ENCODE measurements at regions of chr20 and their contacts with region 1.

Region 1: DNA sequence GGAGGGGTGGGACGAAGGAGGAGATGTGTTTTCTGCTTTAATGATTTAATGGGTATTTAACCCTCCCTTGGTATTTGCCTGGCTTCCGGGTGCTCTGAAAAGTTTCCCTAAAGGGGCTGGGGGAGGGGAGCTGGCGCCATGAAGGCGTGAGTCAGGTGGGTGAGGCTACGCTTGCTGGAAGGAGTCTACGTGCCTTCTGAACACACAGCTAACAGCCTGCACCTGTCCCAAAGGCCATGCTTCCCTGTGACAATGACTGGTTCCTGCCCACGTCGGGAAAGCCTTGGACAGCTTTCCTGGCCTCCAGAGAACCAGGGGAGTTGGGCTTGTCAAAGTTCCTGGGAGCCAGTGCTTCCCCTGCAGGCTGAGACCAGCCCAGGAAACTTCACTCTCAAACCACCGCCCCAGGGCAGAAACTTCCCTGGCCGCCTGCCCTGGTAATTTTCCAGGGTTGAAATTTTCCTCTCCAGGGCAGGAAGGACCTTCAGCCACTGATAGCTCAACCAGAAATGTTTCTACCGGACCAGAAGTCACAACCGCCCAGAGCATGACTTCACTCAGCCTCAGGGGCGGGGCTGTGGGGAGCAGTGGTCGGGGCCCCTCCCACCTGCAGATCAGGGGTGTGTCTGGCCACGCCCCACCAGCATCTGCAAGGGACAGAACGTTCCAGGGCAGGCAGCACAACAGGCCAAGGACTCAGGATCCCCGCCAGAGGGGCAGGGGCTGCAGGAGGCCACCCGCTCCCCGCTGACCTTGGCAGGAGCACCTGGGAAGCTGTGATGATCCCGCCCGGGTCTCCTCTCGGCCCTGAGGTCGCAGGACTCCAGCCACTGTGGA is 18.6 kb upstream of the SLCO4A1 start:
- DNase-seq: peak; percentile 65 to 87 (median 84)
- ATAC-seq: peak; percentile 97
- H3K4me3 ChIP-seq: peak overlapping the region; percentile 24 to 28
- H3K4me3 Mint-ChIP-seq: peak overlapping the region; percentile 60
- H3K27ac ChIP-seq: peak overlapping the region in 1 of 2 experiments; percentile 12
- H3K27ac Mint-ChIP-seq: peak overlapping the region; percentile 60
- H3K4me1 ChIP-seq: peaks cover 19% of the 10 kb centered on the region
- H3K4me1 Mint-ChIP-seq: peaks cover 14% of the 10 kb centered on the region
- H3K27me3 ChIP-seq: no peaks in the 10 kb centered on the region
- H3K27me3 Mint-ChIP-seq: no peaks in the 10 kb centered on the region
- CTCF ChIP-seq: no peak

Region 2: GRCh38 chr20:62642040-62642665 is 18.4 kb after region 1 on chr20 and contains the start of gene SLCO4A1:
- CTCF ChIA-PET with region 1: no interaction called
- POLR2A ChIA-PET with region 1: no interaction called
- intact Hi-C with region 1: loop called in 1 of 2 experiments (anchors 1 kb)
- DNase-seq: peak; percentile 57 to 90 (median 80)
- ATAC-seq: peak; percentile 92
- H3K4me3 ChIP-seq: peak within 1 kb of the TSS; percentile 34 to 59
- H3K4me3 Mint-ChIP-seq: peak within 1 kb of the TSS; percentile 85
- H3K27ac ChIP-seq: no peak within 1 kb of the TSS
- H3K27ac Mint-ChIP-seq: no peak within 1 kb of the TSS
- H3K4me1 ChIP-seq: peaks cover 21% of the 10 kb centered on the region
- H3K4me1 Mint-ChIP-seq: peaks cover 7% of the 10 kb centered on the region
- H3K27me3 ChIP-seq: no peaks in the 10 kb centered on the region
- H3K27me3 Mint-ChIP-seq: peaks cover 2% of the 10 kb centered on the region
- CTCF ChIP-seq: no peak
- total RNA-seq, gene SLCO4A1: 4.5 to 4.7 TPM

Region 3: GRCh38 chr20:62652051-62652926 is 28.6 kb after region 1 on chr20:
- CTCF ChIA-PET with region 1: interaction called, 4 read pairs
- POLR2A ChIA-PET with region 1: interaction called, 3 read pairs
- intact Hi-C with region 1: loop called in 1 of 2 experiments (anchors 1 kb)
- DNase-seq: peak; percentile 44 to 88 (median 75)
- ATAC-seq: peak; percentile 59
- H3K4me3 ChIP-seq: peak overlapping the region; percentile 29 to 35
- H3K4me3 Mint-ChIP-seq: peak overlapping the region; percentile 80
- H3K27ac ChIP-seq: peak overlapping the region; percentile 82 to 83
- H3K27ac Mint-ChIP-seq: peak overlapping the region; percentile 97
- H3K4me1 ChIP-seq: peaks cover 24% of the 10 kb centered on the region
- H3K4me1 Mint-ChIP-seq: peaks cover 31% of the 10 kb centered on the region
- H3K27me3 ChIP-seq: no peaks in the 10 kb centered on the region
- H3K27me3 Mint-ChIP-seq: no peaks in the 10 kb centered on the region
- CTCF ChIP-seq: no peak

Region 4: DNA sequence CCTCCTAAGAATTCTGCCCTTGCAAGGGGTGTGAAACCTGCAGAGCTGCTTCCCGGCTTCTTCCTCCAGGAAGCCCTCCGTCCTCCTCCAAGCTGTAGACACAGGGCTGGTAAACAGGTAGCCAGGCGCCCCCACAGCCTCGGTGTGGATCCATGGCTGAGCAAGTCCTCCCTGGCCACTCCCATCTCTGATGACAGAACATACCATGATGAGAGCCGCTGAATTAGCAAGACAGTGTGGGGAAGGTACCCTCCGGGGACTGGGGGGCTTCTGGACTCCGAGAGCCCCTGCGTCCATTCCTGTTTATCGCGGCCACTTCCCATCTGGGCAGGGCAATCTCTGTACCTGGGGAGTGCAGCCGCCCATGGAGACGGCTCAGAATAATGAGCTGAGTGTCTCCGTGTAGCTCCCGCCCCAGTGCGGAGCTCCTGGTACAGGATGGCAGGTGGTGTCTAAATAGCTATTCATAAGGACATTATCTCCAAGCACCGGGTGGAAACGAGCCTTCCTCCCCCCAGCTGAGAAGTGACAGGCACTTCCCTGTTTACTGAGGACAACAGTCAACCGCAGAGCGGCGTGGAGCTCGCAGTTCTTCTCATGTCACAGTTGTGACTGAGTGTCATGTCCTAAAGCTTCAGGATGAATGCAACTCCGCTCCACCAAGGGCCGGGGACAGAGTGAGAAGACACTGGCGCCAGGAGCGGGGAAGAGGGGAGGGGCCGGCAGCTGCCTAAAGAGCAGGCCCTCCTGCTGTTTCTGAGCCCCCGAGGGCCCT is 62.3 kb after region 1 on chr20:
- CTCF ChIA-PET with region 1: no interaction called
- POLR2A ChIA-PET with region 1: no interaction called
- intact Hi-C with region 1: no loop called
- DNase-seq: peak in 2 of 9 experiments; percentile 24 to 35
- ATAC-seq: no peak
- H3K4me3 ChIP-seq: no peak overlapping the region
- H3K4me3 Mint-ChIP-seq: no peak overlapping the region
- H3K27ac ChIP-seq: no peak overlapping the region
- H3K27ac Mint-ChIP-seq: no peak overlapping the region
- H3K4me1 ChIP-seq: peaks cover 9% of the 10 kb centered on the region
- H3K4me1 Mint-ChIP-seq: peaks cover 4% of the 10 kb centered on the region
- H3K27me3 ChIP-seq: peaks cover 0 to 5% of the 10 kb centered on the region in 2 experiments
- H3K27me3 Mint-ChIP-seq: peaks cover 9% of the 10 kb centered on the region
- CTCF ChIP-seq: no peak